HepG2 (cell line): ENCODE measurements at regions of chrX and their contacts with region 1.

Region 1: DNA sequence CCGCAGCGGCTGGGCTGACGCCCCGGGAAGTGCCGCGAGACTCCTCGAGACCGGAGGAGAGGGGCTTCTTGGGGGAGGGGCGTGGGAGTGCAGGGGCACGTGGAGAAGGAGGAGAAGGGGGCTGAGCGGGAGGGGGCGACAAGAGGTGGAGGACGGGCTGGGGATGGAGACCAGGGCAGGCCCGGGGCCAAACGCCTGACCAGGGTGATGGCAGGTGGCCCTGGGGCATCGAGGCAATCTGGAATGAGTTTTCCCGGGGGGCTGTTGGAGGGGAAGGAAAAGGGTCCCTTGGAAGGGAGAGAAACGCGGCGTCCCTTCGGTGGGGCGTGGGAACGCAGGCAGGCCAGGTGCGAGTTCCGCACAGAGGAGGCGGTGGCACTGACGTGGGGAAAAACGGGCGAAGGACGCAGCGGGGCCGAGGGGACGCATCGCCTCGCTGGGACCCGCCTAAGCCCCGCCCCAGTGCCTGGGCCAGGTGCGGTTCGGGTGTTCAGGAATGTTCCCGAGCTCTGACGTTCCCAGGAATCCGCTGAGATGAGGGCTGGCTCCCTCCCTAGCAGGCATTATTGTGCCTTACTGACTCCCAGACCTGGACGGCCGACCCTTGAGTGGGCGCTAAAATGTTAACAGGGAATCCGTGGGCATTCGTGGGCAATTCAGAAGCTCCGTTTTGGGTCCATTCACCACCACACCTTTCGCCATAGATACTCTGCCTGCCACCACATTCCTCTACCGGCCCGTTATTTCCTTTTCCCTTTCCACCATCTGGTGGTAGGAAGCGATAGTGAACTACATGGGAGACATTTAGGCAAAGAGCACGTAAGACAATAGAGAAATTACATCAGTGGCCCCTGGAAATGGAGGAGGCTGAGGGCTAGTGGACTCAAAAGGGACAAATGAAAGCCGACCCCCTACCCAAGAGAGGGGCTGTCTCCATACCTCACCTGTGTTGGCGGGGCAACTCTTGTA is 795 bp upstream of the SH3KBP1 start:
- DNase-seq: peak; percentile 78
- ATAC-seq: peak; percentile 83
- H3K4me3 ChIP-seq: peak overlapping the region; percentile 49 to 75 (median 61); a peak in 5 of 6 replicates
- H3K27ac ChIP-seq: peak overlapping the region; percentile 73
- H3K4me1 ChIP-seq: peaks cover 52% of the 10 kb centered on the region
- H3K27me3 ChIP-seq: no peaks in the 10 kb centered on the region
- CTCF ChIP-seq: peak; percentile 80
- EP300 ChIP-seq: 0 out of 4 replicates have a peak, but pooled peaks of 1 of the 2 experiments have one; percentile 5
- POLR2A ChIP-seq: peak; percentile 15 to 34; a peak in 1 of 4 replicates
- RAD21 ChIP-seq: peak; percentile 35; the same call in 1 of the 2 replicates

Region 2: DNA sequence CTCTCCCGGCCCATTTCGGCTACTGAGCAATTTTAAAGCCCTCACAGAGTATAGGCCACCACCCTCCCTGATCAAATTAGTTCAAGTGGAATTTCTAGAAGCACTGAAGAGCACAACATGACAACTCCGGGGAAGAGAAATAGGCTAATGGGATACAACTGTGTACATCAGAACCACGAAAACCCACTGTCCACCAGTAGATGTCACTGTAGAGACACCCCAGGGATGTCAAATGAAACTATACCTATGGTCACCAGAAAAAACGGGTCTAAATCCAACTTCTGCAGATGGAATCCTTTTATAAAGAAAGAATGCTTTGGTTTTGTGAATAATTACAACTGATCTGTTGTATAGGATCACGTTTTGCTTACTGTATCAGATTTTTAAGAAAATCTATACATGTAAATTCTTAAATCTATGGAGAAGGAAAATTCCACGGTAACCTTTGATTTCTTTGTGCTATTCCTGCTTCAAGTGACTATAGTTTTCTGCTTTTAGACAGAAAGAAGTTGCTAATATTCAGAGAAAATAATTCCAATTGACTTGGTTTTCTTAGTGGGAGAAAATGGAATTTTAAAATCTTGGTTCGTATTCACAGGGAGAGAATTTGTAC is 343.4 kb before region 1 on chrX:
- CTCF ChIA-PET with region 1: no interaction called
- POLR2A ChIA-PET with region 1: no interaction called
- in situ Hi-C with region 1: loop called (anchors 10 kb)
- intact Hi-C with region 1: loop called (anchors 2 kb)
- DNase-seq: peak; percentile 34
- ATAC-seq: peak; percentile 75
- H3K4me3 ChIP-seq: no peak overlapping the region
- H3K27ac ChIP-seq: no peak overlapping the region
- H3K4me1 ChIP-seq: no peaks in the 10 kb centered on the region
- H3K27me3 ChIP-seq: no peaks in the 10 kb centered on the region
- CTCF ChIP-seq: peak; percentile 68
- EP300 ChIP-seq: no peak
- POLR2A ChIP-seq: no peak
- RAD21 ChIP-seq: peak; percentile 44; the same call in 1 of the 2 replicates

Region 3: GRCh38 chrX:19739683-19740082 is 148.5 kb before region 1 on chrX:
- CTCF ChIA-PET with region 1: interaction called, 8 read pairs
- POLR2A ChIA-PET with region 1: interaction called, 7 read pairs
- in situ Hi-C with region 1: loop called (anchors 10 kb)
- intact Hi-C with region 1: loop called (anchors 1 kb)
- DNase-seq: peak; percentile 20
- ATAC-seq: peak; percentile 65
- H3K4me3 ChIP-seq: no peak overlapping the region
- H3K27ac ChIP-seq: no peak overlapping the region
- H3K4me1 ChIP-seq: peaks cover 35% of the 10 kb centered on the region
- H3K27me3 ChIP-seq: no peaks in the 10 kb centered on the region
- CTCF ChIP-seq: peak; percentile 61
- EP300 ChIP-seq: no peak
- POLR2A ChIP-seq: no peak
- RAD21 ChIP-seq: peak; percentile 28; the same call in 1 of the 2 replicates

Region 4: GRCh38 chrX:19870710-19871490 is 17.3 kb before region 1 on chrX:
- CTCF ChIA-PET with region 1: no interaction called
- POLR2A ChIA-PET with region 1: no interaction called
- in situ Hi-C with region 1: no loop called
- intact Hi-C with region 1: loop called (anchors 2 kb)
- DNase-seq: no peak
- ATAC-seq: no peak
- H3K4me3 ChIP-seq: no peak overlapping the region
- H3K27ac ChIP-seq: peak overlapping the region; percentile 32
- H3K4me1 ChIP-seq: peaks cover 33% of the 10 kb centered on the region
- H3K27me3 ChIP-seq: no peaks in the 10 kb centered on the region
- CTCF ChIP-seq: no peak
- EP300 ChIP-seq: no peak
- POLR2A ChIP-seq: no peak
- RAD21 ChIP-seq: no peak